Sigmoid colon (tissue), 7 donors: ENCODE measurements at regions of chr17 and their contacts with region 1.

Region 1: DNA sequence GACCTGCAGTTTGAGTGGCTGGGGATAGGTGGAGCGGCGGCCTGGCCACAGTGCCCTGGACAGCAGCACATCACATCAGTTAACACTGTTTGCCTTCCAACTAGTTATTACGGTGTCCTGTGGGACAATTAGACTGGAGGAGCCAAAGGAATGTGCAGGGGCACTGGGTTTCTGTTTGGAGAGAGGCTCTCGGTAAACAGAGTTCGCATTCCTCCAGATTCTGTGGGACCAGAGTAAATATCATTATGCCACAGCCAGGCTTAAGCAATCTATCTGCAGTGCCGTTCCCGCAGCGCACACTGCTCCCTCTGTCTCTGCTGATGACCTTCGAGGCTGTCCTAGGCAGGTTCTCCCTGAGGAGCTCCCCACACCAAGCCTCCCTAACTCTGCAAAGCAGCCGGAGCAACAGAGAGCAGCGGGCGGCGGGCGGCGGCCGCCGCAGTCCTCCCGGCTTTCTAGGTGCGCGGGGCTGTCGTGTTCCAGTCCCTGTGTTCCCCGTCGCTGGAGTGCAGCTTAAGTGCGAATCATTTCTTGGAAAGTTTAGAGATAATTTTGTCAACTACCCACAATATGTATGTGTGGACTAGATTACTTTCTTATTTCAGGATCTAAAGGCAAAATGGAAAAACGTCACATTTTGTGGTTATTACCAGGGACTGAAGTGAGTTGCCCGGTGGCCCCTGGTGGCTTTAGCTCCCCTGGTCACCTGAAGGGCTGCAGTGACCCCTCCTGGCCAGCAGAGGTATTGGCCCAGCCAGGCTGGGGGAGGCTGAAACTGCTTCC is 43.2 kb downstream of the PGS1 start:
- DNase-seq: peak; percentile 88
- H3K4me3 ChIP-seq: no peak overlapping the region
- H3K27ac ChIP-seq: no peak overlapping the region
- H3K4me1 ChIP-seq: peaks cover 0 to 10% (median 8%) of the 10 kb centered on the region in 4 donors
- H3K27me3 ChIP-seq: no peaks in the 10 kb centered on the region
- CTCF ChIP-seq: peak; percentile 91 to 99 (median 97)
- EP300 ChIP-seq: no peak
- POLR2A ChIP-seq: no peak

Region 2: DNA sequence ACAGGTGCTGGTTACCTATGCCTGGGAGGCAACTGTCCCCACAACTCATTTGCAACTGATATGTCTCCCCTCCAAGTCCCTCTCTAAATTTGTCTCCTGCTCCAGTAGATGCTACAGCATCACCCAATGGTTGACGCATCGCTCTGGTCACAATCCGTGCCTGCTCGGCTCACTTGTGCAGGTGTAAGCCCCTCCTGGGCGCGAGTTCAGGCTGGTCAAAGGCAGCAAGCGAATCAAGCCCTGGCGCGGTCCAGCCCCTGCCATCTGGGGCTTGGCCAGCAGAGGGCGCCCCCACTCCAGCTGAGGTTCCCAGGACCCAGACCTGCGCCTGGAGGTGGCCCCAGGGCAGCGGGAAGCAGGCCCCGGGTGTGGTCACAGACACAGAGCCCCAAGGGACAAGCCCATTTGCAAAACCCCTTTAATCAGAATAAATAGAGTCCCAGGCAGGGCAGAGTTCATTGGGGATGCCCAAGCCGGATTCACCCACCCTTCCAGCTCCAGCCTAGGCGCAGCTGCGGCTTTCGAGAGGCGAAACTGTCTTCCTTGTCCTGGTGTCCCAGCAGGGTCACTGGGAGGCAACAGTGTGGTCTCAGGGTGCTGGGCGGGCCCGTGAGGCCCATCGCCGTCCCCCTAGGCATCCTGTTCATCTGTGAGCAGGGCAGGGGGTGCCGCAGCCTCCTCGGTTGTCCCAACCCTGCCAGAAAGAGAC is 309.0 kb before region 1 on chr17:
- intact Hi-C with region 1: loop called (anchors 10 kb)
- DNase-seq: peak; percentile 83
- H3K4me3 ChIP-seq: no peak overlapping the region
- H3K27ac ChIP-seq: no peak overlapping the region
- H3K4me1 ChIP-seq: peaks cover 0 to 14% (median 5%) of the 10 kb centered on the region in 4 donors
- H3K27me3 ChIP-seq: peaks cover 0 to 20% (median 6%) of the 10 kb centered on the region in 3 donors
- CTCF ChIP-seq: peak; percentile 94 to 99 (median 98)
- EP300 ChIP-seq: no peak
- POLR2A ChIP-seq: no peak

Region 3: GRCh38 chr17:78289802-78290363 is 131.8 kb before region 1 on chr17:
- intact Hi-C with region 1: loop called (anchors 1 kb)
- DNase-seq: peak; percentile 91
- H3K4me3 ChIP-seq: no peak overlapping the region
- H3K27ac ChIP-seq: no peak overlapping the region
- H3K4me1 ChIP-seq: peaks cover 0 to 9% (median 0%) of the 10 kb centered on the region in 4 donors
- H3K27me3 ChIP-seq: no peaks in the 10 kb centered on the region
- CTCF ChIP-seq: peak; percentile 67 to 97 (median 83)
- EP300 ChIP-seq: no peak
- POLR2A ChIP-seq: no peak

Region 4: DNA sequence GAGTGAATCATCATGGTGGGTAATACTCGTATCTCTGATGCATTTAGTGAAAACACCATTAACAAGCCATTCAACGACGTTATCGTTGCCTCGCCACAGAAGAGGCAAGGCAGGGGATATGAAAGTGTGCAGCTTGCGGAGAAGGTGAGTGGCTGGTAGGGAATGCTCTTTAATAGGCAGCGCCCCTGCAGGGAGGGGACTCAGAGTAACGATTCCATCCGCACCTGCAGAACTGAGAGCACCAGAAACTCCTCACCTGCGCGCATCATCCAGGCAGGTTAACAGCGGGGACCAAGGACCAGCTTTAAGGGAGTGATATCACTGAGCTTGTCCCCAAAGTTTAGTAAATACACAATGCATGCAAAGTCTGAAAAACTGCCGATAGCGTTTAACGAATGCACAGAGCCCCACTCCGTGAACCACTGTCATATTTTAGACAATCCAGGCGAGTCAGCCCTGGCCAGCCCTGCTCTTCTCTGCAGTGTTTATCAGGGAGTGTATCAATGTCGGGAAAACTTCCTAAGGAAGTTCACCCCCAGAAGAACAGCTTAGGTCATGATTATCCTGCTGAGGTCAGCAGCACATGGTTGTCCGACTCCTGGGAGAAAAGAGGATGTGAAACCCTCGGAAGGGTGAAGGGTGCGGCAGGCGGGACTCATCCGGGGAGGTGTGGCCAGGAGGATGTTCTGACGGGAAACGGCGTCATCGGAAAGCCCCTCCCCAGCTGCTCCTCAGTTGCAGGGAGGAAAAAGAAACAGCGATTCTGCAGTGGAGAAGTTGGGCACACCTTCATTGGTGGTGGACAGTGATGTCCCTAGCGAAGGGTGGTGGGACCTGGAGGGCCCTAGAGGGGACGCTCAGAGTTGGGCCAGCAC is 224.0 kb after region 1 on chr17:
- intact Hi-C with region 1: no loop called
- DNase-seq: peak; percentile 89
- H3K4me3 ChIP-seq: no peak overlapping the region
- H3K27ac ChIP-seq: peak overlapping the region in 2 of 4 donors; percentile 14 to 57
- H3K4me1 ChIP-seq: no peaks in the 10 kb centered on the region
- H3K27me3 ChIP-seq: no peaks in the 10 kb centered on the region
- CTCF ChIP-seq: no peak
- EP300 ChIP-seq: peak in 1 of 4 donors; percentile 84
- POLR2A ChIP-seq: no peak